ENCODE measurements at regions of chr6 and their contacts with region 1.

Region 1: GRCh38 chr6:83417880-83418663 is 12.8 kb downstream of the ME1 start:
- DNase-seq: peak in 1 of 2 experiments; percentile 63
- H3K4me3 ChIP-seq: no peak overlapping the region
- H3K4me3 Mint-ChIP-seq: no peak overlapping the region
- H3K27ac Mint-ChIP-seq: peak overlapping the region; percentile 5
- H3K4me1 ChIP-seq: peaks cover 33% of the 10 kb centered on the region
- H3K4me1 Mint-ChIP-seq: peaks cover 35% of the 10 kb centered on the region
- H3K27me3 ChIP-seq: no peaks in the 10 kb centered on the region
- H3K27me3 Mint-ChIP-seq: no peaks in the 10 kb centered on the region
- CTCF ChIP-seq: peak; percentile 63 to 75

Region 2: DNA sequence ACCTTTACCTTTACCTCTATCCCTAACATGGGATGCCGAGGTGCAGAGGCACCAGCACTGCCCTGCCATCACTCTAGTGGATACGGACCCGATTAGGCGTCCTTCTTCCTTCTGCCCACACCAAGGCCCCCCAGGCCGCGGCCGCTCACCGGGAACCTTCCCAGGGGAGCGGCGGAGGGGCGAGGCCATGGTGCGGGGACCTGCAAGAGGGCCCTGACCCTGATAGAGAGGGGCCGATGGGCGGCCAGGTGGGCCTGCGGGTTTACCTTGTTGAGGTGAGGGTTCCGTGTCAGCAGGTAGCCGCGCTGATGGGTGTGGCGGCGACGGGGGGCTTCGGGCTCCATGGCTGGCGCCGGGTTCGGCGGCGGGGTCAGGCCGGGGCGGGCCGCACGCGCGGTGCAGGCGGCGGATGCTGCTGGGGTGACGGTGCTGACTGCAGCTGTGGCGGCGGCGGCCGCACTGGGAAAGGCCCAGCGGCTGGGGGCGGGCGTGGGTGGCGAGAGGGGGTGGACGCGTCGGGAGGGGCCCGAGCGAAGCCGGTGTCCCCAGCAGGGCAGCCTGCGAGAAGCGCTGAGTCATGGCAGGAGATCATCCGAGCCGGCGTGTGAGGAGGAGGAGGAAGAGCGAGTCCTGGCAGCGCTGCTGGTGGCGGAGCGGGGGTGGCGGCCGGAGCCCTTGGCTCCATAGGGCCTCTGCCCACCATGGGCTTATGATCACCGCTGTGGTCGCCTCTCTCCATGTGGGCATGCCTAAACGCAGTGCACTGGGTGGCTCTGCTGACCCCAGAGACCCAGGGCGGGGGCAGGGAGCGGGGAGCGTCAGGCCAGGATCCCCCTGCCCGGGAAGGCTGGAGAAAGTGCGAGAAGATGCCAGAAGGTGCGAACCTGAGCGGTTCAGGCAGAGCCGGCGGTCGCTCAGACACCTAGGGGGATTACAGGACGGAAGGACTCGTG is 12.8 kb after region 1 on chr6 and contains the start of gene ME1:
- CTCF ChIA-PET with region 1: no interaction called
- POLR2A ChIA-PET with region 1: interaction called, 4 read pairs
- intact Hi-C with region 1: loop called (anchors 1 kb)
- DNase-seq: peak; percentile 91 to 94
- H3K4me3 ChIP-seq: peak within 1 kb of the TSS; percentile 79
- H3K4me3 Mint-ChIP-seq: peak within 1 kb of the TSS; percentile 100
- H3K27ac Mint-ChIP-seq: peak within 1 kb of the TSS; percentile 99
- H3K4me1 ChIP-seq: peaks cover 41% of the 10 kb centered on the region
- H3K4me1 Mint-ChIP-seq: peaks cover 25% of the 10 kb centered on the region
- H3K27me3 ChIP-seq: no peaks in the 10 kb centered on the region
- H3K27me3 Mint-ChIP-seq: no peaks in the 10 kb centered on the region
- CTCF ChIP-seq: no peak
- total RNA-seq, gene ME1: 121 and 131 TPM in 2 replicates

Measured in Caco-2 (cell line).